H1 (cell line): ENCODE measurements at regions of chr4 and their contacts with region 1.

Region 1: DNA sequence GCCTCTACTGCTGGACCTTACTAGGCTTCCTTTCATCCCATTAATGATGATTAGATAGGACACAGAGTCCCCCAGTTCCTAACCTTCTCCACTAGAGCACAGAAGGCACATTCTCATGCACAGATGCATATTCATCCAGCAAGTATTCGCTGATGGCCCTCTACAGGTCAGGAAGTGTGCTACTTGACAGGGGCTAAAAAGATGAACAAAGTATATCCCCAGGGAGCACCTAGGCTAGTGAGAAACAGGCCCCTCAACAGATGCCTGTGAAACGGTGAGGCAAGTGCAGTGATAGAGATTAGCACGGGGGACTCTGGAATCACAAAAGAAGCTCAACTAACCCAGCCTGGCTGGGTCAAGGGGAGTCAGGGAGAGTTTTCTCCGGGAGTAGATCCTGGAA is 95.8 kb downstream of the MGST2 start:
- DNase-seq: no peak
- H3K4me3 ChIP-seq: no peak overlapping the region
- H3K27ac ChIP-seq: no peak overlapping the region
- H3K4me1 ChIP-seq: peaks cover 0 to 11% (median 5%) of the 10 kb centered on the region in 4 experiments; a peak in 2 of 7 replicates
- H3K27me3 ChIP-seq: no peaks in the 10 kb centered on the region; a peak in 1 of 7 replicates
- CTCF ChIP-seq: peak in 2 of 3 experiments; percentile 67 to 81; a peak in 3 of 4 replicates
- EP300 ChIP-seq: no peak
- POLR2A ChIP-seq: no peak
- RAD21 ChIP-seq: peak; percentile 45 to 54

Region 2: DNA sequence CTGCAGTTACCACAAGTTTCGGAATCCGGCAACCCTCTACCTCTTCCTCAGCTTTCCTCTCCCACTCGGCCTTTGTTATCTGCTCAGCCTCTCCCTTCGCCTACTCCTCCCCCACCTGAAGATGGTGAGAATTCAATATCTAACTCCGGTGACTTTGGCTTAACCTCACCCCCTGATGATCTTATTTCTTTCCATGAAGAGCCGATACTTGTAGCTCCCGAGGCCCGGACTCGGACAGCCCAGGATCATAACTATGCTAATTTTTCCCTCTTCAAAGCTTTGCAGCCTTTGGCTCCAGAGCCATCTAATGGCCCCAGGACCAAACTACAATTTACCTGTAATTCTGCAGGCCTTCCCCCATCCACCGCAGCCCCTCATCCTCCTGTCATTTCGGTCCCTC is 127.8 kb before region 1 on chr4:
- CTCF ChIA-PET with region 1: no interaction called
- POLR2A ChIA-PET with region 1: no interaction called
- DNase-seq: peak in 1 of 2 experiments; percentile 63
- H3K4me3 ChIP-seq: peak overlapping the region in 2 of 4 experiments; percentile 23 to 45; a peak in 3 of 8 replicates
- H3K27ac ChIP-seq: no peak overlapping the region
- H3K4me1 ChIP-seq: peaks cover 0 to 5% (median under 1%) of the 10 kb centered on the region in 4 experiments; a peak in 3 of 7 replicates
- H3K27me3 ChIP-seq: peaks cover 4 to 27% (median 15%) of the 10 kb centered on the region in 4 experiments
- CTCF ChIP-seq: peak; percentile 40 to 68 (median 62)
- EP300 ChIP-seq: no peak
- POLR2A ChIP-seq: no peak
- RAD21 ChIP-seq: peak; percentile 83

Region 3: GRCh38 chr4:139696491-139696890 is 65.0 kb before region 1 on chr4:
- CTCF ChIA-PET with region 1: no interaction called
- POLR2A ChIA-PET with region 1: no interaction called
- DNase-seq: no peak
- H3K4me3 ChIP-seq: no peak overlapping the region
- H3K27ac ChIP-seq: no peak overlapping the region
- H3K4me1 ChIP-seq: no peaks in the 10 kb centered on the region
- H3K27me3 ChIP-seq: no peaks in the 10 kb centered on the region
- CTCF ChIP-seq: no peak
- EP300 ChIP-seq: no peak
- POLR2A ChIP-seq: no peak
- RAD21 ChIP-seq: no peak

Region 4: GRCh38 chr4:139749338-139749737 is 12.1 kb before region 1 on chr4:
- CTCF ChIA-PET with region 1: interaction called, 17 read pairs
- POLR2A ChIA-PET with region 1: no interaction called
- DNase-seq: no peak
- H3K4me3 ChIP-seq: no peak overlapping the region
- H3K27ac ChIP-seq: no peak overlapping the region
- H3K4me1 ChIP-seq: peaks cover 0 to 3% (median 1%) of the 10 kb centered on the region in 4 experiments; a peak in 2 of 7 replicates
- H3K27me3 ChIP-seq: no peaks in the 10 kb centered on the region
- CTCF ChIP-seq: no peak
- EP300 ChIP-seq: no peak
- POLR2A ChIP-seq: no peak
- RAD21 ChIP-seq: no peak